Activated CD4-positive, alpha-beta T cell treated with anti-CD3 and anti-CD28 coated beads for 36 hours (primary cell): ENCODE measurements at regions of chr11 and their contacts with region 1.

Region 1: DNA sequence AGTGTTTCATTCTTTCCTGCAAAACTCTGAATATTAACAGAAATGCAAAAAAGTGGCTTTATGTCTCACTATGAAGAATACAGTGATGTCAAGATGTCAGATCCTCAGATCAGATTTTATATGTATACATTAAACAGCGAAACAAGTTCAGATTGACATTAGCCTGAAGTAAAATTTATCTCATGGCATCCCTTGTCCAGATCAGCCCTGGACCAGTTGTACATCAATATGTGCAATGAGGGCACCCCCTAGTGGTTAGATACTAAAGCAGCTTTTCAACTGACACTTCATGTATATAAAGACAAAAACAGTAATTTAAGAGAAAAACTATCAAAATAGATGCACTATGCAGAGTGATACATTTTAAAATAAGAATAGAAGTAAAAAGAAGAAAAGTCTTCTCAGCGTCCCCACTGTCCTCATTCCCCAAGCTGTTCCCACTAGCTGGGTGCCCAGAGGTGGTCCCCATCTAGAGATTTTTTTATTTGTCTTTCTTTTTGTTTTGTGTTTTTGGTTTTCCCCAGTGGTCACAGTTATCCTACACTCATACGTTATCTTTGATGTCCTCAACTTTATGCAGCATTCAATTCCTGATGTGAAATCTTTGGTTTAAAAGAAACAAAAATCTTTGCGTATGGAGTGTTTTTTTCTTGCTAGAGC is 2193.4 kb upstream of the RAG2 start:
- DNase-seq: peak; percentile 22
- ATAC-seq: no peak
- H3K4me3 Mint-ChIP-seq: no peak overlapping the region
- H3K27ac Mint-ChIP-seq: no peak overlapping the region
- H3K4me1 Mint-ChIP-seq: no peaks in the 10 kb centered on the region
- H3K27me3 Mint-ChIP-seq: no peaks in the 10 kb centered on the region

Region 2: DNA sequence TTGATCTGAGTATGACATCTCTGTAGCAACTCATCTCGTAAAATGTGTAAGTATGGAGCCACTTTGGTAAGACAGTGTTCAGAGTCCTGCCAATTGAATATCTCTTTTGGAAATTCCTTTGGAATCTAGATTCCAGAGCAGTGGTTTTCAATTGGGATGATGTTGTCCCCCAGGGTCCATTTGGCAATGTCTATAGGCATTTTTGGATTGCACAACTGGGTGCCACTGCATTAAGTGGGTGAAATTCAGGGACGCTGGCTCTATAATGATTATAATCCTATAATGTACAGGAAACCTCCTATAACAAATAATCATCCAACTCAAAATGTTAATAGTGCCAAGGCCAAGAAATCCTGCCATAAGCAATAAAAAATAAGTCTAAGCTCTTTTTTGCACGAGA is 1788.6 kb before region 1 on chr11:
- CTCF ChIA-PET with region 1: no interaction called
- POLR2A ChIA-PET with region 1: no interaction called
- intact Hi-C with region 1: loop called in 1 of 2 experiments (anchors 5 kb)
- DNase-seq: no peak
- ATAC-seq: no peak
- H3K4me3 Mint-ChIP-seq: no peak overlapping the region
- H3K27ac Mint-ChIP-seq: no peak overlapping the region
- H3K4me1 Mint-ChIP-seq: no peaks in the 10 kb centered on the region
- H3K27me3 Mint-ChIP-seq: no peaks in the 10 kb centered on the region

Region 3: DNA sequence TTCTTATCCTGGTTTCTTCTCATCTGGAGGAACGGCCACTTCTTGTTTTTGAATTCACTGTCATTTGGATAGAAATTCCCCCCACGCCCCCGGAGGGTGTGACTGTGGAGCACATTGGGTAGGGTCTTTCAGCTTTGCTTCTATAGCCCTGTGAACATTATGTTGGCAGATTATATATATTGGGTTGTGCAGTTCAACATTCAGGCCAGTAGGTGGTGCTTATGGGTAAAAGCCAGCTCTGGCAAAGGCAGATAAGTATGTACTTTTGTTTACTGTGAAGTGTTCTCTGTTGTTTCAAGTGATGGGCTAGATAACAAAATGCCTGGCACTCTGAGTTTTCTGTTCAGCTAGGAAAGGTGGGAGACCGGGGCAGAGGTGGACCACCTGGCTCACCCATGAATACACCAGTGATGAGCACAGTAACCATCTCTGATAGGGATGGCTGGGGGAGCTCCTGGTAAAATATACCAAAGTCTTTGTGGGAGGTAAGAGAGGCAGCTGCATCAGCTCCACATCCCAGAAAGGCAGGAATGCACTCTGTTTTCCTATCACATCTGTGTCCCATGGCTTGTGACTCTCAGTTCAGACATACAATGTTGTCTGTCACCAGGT is 845.2 kb before region 1 on chr11:
- CTCF ChIA-PET with region 1: no interaction called
- POLR2A ChIA-PET with region 1: no interaction called
- intact Hi-C with region 1: loop called in 1 of 2 experiments (anchors 5 kb)
- DNase-seq: peak; percentile 30
- ATAC-seq: no peak
- H3K4me3 Mint-ChIP-seq: no peak overlapping the region
- H3K27ac Mint-ChIP-seq: no peak overlapping the region
- H3K4me1 Mint-ChIP-seq: no peaks in the 10 kb centered on the region
- H3K27me3 Mint-ChIP-seq: no peaks in the 10 kb centered on the region

Region 4: GRCh38 chr11:38345289-38345804 is 446.1 kb before region 1 on chr11:
- CTCF ChIA-PET with region 1: no interaction called
- POLR2A ChIA-PET with region 1: no interaction called
- intact Hi-C with region 1: no loop called
- DNase-seq: no peak
- ATAC-seq: no peak
- H3K4me3 Mint-ChIP-seq: no peak overlapping the region
- H3K27ac Mint-ChIP-seq: no peak overlapping the region
- H3K4me1 Mint-ChIP-seq: no peaks in the 10 kb centered on the region
- H3K27me3 Mint-ChIP-seq: no peaks in the 10 kb centered on the region